WTC11 (cell line): ENCODE measurements at regions of chr11 and their contacts with region 1.

Region 1: DNA sequence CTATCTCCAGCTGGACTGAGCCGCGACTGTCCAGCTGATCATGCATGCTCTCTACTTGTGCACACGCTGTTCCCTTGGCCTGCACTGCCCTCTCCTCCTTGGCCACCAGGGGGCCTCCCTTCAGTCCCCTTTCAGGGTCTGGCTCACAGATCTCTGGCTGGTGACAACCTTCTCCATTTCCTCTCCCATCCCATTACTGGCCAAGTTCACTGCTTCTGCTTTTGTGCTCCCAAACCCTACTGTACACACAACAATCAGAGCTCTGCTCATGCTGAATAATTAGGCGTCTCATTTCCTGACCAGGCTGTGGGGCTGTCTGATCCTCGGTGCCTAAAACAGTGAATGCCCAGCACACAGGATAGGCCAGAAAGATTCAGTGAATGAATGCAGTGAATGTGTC is 224.0 kb upstream of the NARS2 start:
- DNase-seq: peak; percentile 82
- ATAC-seq: peak; percentile 90
- H3K4me3 Mint-ChIP-seq: no peak overlapping the region
- H3K27ac Mint-ChIP-seq: no peak overlapping the region
- H3K4me1 Mint-ChIP-seq: peaks cover 28% of the 10 kb centered on the region
- H3K27me3 Mint-ChIP-seq: no peaks in the 10 kb centered on the region
- CTCF ChIP-seq: peak; percentile 93

Region 2: DNA sequence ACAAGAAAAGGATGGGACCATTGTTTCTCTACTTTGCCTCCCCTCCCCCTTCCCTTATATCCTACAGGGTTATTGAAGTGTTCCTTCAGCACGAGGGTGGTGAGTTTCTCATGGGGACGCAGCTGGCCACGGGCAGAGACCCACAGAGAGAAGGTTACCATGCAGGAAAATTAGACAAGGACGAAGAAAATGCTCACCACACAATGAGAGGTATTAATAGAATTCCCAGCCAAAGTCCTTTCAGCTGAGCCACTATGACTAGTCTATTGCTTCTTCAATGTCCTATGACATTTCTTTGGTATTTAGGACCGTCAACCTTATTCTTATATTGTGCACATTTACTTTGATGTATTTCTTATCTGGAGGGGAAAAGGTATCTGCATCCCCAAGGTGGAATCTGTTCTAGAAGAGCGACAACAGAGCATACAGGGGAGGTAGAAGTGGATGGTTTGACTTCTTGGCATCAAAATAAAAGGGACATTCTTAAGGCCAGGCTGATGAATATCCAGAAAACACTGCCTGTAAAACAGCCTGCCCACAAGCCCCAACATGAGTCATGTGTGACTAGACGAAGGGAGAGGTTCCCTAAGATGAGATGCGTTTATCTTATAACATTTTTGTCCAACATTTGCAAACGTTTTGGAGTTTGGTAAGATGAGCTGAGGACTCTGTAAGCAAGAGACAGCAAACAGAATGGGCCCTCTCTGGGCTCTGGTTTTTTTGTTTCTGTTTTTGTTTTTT is 14.2 kb before region 1 on chr11:
- CTCF ChIA-PET with region 1: interaction called, 12 read pairs
- POLR2A ChIA-PET with region 1: no interaction called
- DNase-seq: no peak
- ATAC-seq: no peak
- H3K4me3 Mint-ChIP-seq: no peak overlapping the region
- H3K27ac Mint-ChIP-seq: no peak overlapping the region
- H3K4me1 Mint-ChIP-seq: peaks cover 25% of the 10 kb centered on the region
- H3K27me3 Mint-ChIP-seq: no peaks in the 10 kb centered on the region
- CTCF ChIP-seq: no peak

Region 3: GRCh38 chr11:78812513-78813293 is 14.0 kb after region 1 on chr11:
- CTCF ChIA-PET with region 1: interaction called, 11 read pairs
- POLR2A ChIA-PET with region 1: no interaction called
- DNase-seq: no peak
- ATAC-seq: peak; percentile 74
- H3K4me3 Mint-ChIP-seq: no peak overlapping the region
- H3K27ac Mint-ChIP-seq: peak overlapping the region; percentile 16; the same call in 1 of the 2 replicates
- H3K4me1 Mint-ChIP-seq: peaks cover 23% of the 10 kb centered on the region
- H3K27me3 Mint-ChIP-seq: no peaks in the 10 kb centered on the region
- CTCF ChIP-seq: no peak